Activated CD4-positive, alpha-beta memory T cell treated with anti-CD3 and anti-CD28 coated beads for 36 hours (primary cell): ENCODE measurements at regions of chr15 and their contacts with region 1.

Region 1: DNA sequence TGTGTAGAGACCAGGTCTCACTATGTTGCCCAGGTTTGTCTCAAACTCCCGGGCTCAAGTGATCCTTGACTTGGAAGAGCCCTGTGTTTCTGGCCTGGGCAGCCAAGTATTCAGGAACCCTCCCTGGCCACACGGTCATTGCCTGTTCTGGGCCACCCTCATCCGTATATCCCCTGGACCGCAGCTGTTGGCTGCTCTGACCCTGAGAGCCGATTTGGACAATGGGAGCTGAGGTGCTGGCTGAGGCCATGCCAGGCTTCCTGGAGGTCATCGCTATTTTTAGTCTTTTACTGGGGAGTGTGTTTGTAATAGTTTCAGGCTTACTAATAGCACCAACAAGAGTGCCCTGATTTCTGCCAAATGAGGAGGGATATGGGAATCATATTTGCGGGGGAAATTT is 60.7 kb downstream of the ADAMTS7 start:
- DNase-seq: no peak
- H3K4me3 Mint-ChIP-seq: peak overlapping the region; percentile 39
- H3K27ac Mint-ChIP-seq: no peak overlapping the region
- H3K4me1 Mint-ChIP-seq: peaks cover 5% of the 10 kb centered on the region
- H3K27me3 Mint-ChIP-seq: no peaks in the 10 kb centered on the region

Region 2: GRCh38 chr15:78618490-78618934 is 132.1 kb before region 1 on chr15:
- CTCF ChIA-PET with region 1: interaction called, 8 read pairs
- POLR2A ChIA-PET with region 1: no interaction called
- intact Hi-C with region 1: loop called (anchors 1 kb)
- DNase-seq: peak; percentile 85
- H3K4me3 Mint-ChIP-seq: no peak overlapping the region
- H3K27ac Mint-ChIP-seq: no peak overlapping the region
- H3K4me1 Mint-ChIP-seq: peaks cover 9% of the 10 kb centered on the region
- H3K27me3 Mint-ChIP-seq: peaks cover 41% of the 10 kb centered on the region

Region 3: DNA sequence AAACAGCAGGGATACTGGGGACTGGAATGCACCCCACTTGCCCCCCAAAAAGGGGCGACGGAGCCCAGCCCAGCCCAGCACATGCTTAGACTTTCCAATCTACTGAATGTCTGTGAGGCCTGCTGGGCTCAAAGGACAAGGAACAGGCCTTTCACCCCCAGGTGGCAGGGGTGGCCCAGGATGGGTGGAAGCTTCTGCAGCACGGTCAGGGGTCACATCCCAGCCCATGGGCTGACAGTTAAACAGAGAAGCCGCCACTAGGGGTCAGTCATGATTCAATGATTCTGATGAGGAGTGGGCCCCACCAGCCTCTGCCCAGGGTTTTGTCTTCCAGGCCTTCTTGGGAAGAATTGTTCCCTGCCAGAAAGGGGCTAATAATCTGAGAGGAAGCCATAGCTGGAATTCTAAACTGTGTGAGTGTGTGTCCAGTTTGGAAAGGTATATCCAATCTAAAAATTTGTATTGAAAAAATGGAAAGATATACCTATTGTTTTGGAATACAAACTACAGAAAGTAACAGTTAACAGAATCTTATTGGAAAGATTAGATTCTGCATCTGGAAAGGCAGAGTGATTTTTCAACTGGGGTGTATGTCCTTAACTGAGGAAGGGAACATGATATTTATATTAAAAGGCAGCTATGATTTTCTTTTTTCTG is 111.8 kb before region 1 on chr15:
- CTCF ChIA-PET with region 1: interaction called, 11 read pairs
- POLR2A ChIA-PET with region 1: no interaction called
- intact Hi-C with region 1: no loop called
- DNase-seq: peak; percentile 61
- H3K4me3 Mint-ChIP-seq: no peak overlapping the region
- H3K27ac Mint-ChIP-seq: no peak overlapping the region
- H3K4me1 Mint-ChIP-seq: peaks cover 10% of the 10 kb centered on the region
- H3K27me3 Mint-ChIP-seq: peaks cover 20% of the 10 kb centered on the region

Region 4: GRCh38 chr15:78714890-78715289 is 35.7 kb before region 1 on chr15:
- CTCF ChIA-PET with region 1: interaction called, 6 read pairs
- POLR2A ChIA-PET with region 1: no interaction called
- intact Hi-C with region 1: loop called (anchors 5 kb)
- DNase-seq: peak; percentile 35
- H3K4me3 Mint-ChIP-seq: no peak overlapping the region
- H3K27ac Mint-ChIP-seq: no peak overlapping the region
- H3K4me1 Mint-ChIP-seq: peaks cover 4% of the 10 kb centered on the region
- H3K27me3 Mint-ChIP-seq: peaks cover 16% of the 10 kb centered on the region

Region 5: GRCh38 chr15:78739996-78740903 is 10.3 kb before region 1 on chr15:
- CTCF ChIA-PET with region 1: interaction called, 13 read pairs
- POLR2A ChIA-PET with region 1: no interaction called
- intact Hi-C with region 1: no loop called
- DNase-seq: peak; percentile 82
- H3K4me3 Mint-ChIP-seq: no peak overlapping the region
- H3K27ac Mint-ChIP-seq: no peak overlapping the region
- H3K4me1 Mint-ChIP-seq: peaks cover 3% of the 10 kb centered on the region
- H3K27me3 Mint-ChIP-seq: no peaks in the 10 kb centered on the region